H1 (cell line): ENCODE measurements at regions of chr2 and their contacts with region 1.

Region 1: GRCh38 chr2:238415036-238415764 is 11.5 kb upstream of the ASB1 start:
- DNase-seq: no peak
- H3K4me3 ChIP-seq: no peak overlapping the region
- H3K27ac ChIP-seq: peak overlapping the region; percentile 48; the same call in 1 of the 2 replicates
- H3K4me1 ChIP-seq: peaks cover 0 to 11% (median 6%) of the 10 kb centered on the region in 4 experiments; a peak in 5 of 7 replicates
- H3K27me3 ChIP-seq: no peaks in the 10 kb centered on the region
- CTCF ChIP-seq: peak in 2 of 3 experiments; percentile 29 to 45; a peak in 3 of 4 replicates
- EP300 ChIP-seq: no peak
- POLR2A ChIP-seq: 0 out of 3 replicates have a peak, but pooled peaks of 1 of the 2 experiments have one; percentile 44
- RAD21 ChIP-seq: peak; percentile 33 to 36

Region 2: DNA sequence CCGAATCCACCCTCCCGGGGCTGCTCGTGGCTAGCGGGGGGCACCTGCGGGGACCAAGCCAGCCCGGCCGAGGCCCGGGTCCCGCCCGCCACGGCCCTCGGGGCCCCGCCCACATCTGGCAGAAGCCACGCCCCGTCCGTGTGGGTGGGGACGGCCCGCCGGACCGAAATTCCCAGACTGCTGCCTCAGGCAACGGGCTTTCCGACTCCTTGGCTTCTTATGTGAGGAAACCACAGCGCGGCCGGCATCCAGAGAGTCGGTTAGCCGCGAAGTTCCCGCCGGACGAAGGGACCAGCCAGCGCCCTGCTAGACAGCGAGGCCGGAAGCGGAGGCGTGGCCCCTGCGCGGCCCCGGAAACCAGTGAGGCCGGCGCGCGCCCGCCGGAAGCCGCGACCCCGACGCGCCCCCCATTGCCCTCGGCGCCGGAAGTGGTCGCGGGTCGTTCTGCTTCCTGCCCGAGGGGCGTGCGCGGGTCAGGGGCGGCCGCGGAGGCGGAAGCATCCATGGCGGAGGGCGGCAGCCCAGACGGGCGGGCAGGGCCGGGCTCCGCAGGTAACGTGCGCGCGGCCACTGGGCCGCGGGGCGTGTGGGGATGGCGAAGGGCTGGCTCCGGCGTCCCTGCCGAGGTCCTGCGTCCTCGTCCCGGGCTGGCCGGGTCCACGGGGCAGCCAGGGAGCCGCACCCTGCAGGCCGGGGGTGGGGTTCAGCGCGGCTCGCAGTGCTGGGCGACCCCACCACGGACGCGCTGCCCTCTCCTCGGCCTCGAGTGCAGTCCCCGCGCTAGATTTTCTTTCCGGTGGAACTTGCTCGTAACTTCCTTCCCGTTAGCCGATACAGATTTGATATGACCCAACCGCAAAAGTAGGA is 11.6 kb after region 1 on chr2 and contains the start of gene ASB1:
- CTCF ChIA-PET with region 1: interaction called, 8 read pairs
- POLR2A ChIA-PET with region 1: interaction called, 10 read pairs
- DNase-seq: peak; percentile 44 to 90
- H3K4me3 ChIP-seq: peak within 1 kb of the TSS; percentile 74 to 98 (median 79)
- H3K27ac ChIP-seq: peak within 1 kb of the TSS; percentile 84
- H3K4me1 ChIP-seq: peaks cover 0 to 11% (median 6%) of the 10 kb centered on the region in 4 experiments; a peak in 4 of 7 replicates
- H3K27me3 ChIP-seq: no peaks in the 10 kb centered on the region
- CTCF ChIP-seq: no peak; a peak in 1 of 4 replicates
- EP300 ChIP-seq: no peak; a peak in 1 of 3 replicates
- POLR2A ChIP-seq: peak in 1 of 2 experiments; percentile 74; a peak in 2 of 3 replicates
- RAD21 ChIP-seq: no peak
- total RNA-seq, gene ASB1: 32.7 and 36.0 TPM in 2 replicates

Region 3: DNA sequence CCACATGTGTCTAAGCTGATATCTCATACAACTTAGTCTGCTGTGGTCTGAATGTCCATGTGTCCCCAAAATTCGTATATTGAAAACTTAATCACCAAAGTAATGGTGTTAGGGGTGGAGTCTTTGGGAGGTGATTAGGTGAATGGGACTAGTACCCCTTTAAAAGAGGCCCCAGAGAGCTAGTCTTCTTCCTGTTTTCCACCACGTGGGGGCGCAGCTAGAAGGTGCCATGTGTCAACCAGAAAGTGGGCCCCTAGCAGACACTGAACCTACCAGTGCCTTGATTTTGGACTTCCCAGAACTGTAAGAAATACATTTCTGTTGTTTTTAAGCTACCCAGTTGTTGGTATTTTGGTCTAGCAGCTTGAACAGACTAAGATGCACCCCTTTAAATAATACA is 98.1 kb after region 1 on chr2:
- CTCF ChIA-PET with region 1: no interaction called
- POLR2A ChIA-PET with region 1: no interaction called
- DNase-seq: peak in 1 of 2 experiments; percentile 80
- H3K4me3 ChIP-seq: no peak overlapping the region
- H3K27ac ChIP-seq: no peak overlapping the region
- H3K4me1 ChIP-seq: peaks cover 4 to 27% (median 12%) of the 10 kb centered on the region in 4 experiments; a peak in 6 of 7 replicates
- H3K27me3 ChIP-seq: no peaks in the 10 kb centered on the region
- CTCF ChIP-seq: peak; percentile 69 to 75 (median 70)
- EP300 ChIP-seq: no peak
- POLR2A ChIP-seq: no peak
- RAD21 ChIP-seq: peak; percentile 68 to 77